Calu3 (cell line): ENCODE measurements at regions of chr2 and their contacts with region 1.

Region 1: DNA sequence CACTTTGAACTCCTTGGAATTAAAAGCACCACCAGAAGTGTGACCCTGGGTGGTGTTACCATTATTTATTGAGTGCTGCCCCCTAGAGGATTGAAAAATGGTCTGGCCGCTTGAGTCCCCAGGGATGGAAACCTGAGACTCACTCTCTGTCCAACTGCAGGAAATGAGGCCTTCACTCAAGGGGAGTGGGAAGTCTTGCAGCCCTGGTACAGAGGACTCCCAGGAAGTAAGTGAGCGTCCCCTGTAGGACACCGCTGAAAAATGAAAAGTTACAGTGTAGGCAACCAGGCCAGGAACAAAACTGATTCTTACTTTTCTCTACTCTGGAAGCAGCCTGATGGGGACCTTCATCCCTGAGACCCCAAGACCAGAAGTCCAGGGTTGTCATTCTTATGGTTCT is 2.2 kb upstream of the NRP2 start:
- DNase-seq: peak; percentile 82
- H3K4me3 Mint-ChIP-seq: no peak overlapping the region
- H3K27ac Mint-ChIP-seq: no peak overlapping the region
- H3K4me1 Mint-ChIP-seq: peaks cover 19% of the 10 kb centered on the region
- H3K27me3 Mint-ChIP-seq: no peaks in the 10 kb centered on the region
- CTCF ChIP-seq: peak; percentile 62

Region 2: DNA sequence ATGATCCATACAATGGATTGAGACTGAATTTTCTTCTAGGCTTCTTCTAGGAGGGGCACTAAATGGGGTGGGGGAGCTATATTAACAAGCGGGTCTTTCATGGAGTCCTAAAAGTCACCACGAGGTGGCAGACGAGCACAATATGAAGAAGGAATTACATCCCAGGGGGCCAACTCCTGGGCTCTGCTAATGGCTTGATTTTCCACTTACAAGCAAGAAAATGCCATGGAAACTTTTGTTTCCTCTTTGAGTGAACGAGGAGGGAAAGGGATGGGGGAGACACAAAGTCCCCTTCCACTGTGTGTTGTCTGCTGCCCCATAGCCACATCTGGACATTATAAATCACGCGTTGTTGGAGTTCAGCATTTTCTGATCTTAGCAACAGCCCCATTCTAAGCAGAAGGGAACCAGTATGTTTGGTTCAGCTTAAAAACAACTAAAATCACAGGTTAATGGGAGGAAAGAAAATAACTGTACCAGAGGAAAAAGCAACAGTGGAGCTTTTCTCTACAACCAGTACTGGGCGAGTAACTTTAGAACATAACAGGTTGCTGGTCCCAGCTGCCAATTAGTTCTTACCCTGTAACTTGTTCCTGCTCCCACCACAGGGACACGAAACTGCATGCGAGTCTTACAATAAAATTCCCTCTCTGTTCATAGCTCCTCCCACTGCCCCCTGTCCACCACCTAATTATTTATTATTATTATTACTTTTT is 1419.7 kb before region 1 on chr2:
- CTCF ChIA-PET with region 1: no interaction called
- intact Hi-C with region 1: loop called (anchors 5 kb)
- DNase-seq: peak; percentile 66
- H3K4me3 Mint-ChIP-seq: no peak overlapping the region
- H3K27ac Mint-ChIP-seq: no peak overlapping the region
- H3K4me1 Mint-ChIP-seq: peaks cover 23% of the 10 kb centered on the region
- H3K27me3 Mint-ChIP-seq: no peaks in the 10 kb centered on the region
- CTCF ChIP-seq: peak; percentile 88

Region 3: DNA sequence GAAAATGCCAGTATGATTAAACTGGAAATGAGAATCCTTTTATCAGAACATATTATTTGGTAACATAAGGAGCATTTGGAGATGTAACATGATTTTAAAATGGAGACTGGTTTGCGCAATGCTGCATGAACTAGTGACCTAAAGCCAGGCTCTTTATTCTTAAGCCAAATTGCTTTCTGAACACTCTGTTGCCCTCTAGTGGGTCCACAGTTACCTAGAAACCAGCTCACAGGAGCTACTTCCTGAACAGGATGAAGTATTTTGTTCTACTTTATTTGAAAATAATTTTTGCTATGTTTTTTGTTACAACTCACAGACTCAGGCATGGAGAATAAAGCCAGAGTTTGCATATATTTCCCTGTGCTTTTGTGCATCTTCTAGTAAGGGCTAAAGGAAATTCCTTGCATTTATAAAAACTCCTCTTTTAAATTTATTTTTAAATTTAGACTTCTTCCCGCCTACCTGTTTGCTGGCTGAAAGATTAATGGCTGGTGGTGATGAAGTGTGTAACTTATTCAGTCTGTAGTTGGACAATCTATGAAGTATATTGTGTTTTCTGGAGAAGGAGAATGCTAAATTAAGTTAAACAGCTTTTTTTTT is 988.1 kb before region 1 on chr2:
- CTCF ChIA-PET with region 1: no interaction called
- intact Hi-C with region 1: loop called (anchors 5 kb)
- DNase-seq: peak; percentile 63
- H3K4me3 Mint-ChIP-seq: no peak overlapping the region
- H3K27ac Mint-ChIP-seq: no peak overlapping the region
- H3K4me1 Mint-ChIP-seq: peaks cover 8% of the 10 kb centered on the region
- H3K27me3 Mint-ChIP-seq: no peaks in the 10 kb centered on the region
- CTCF ChIP-seq: peak; percentile 57

Region 4: GRCh38 chr2:204885747-204886146 is 794.3 kb before region 1 on chr2:
- CTCF ChIA-PET with region 1: interaction called, 5 read pairs
- intact Hi-C with region 1: loop called (anchors 1 kb)
- DNase-seq: peak; percentile 11
- H3K4me3 Mint-ChIP-seq: no peak overlapping the region
- H3K27ac Mint-ChIP-seq: no peak overlapping the region
- H3K4me1 Mint-ChIP-seq: no peaks in the 10 kb centered on the region
- H3K27me3 Mint-ChIP-seq: no peaks in the 10 kb centered on the region
- CTCF ChIP-seq: no peak

Region 5: GRCh38 chr2:205748639-205749477 is 68.8 kb after region 1 on chr2:
- CTCF ChIA-PET with region 1: interaction called, 4 read pairs
- intact Hi-C with region 1: loop called (anchors 5 kb)
- DNase-seq: peak; percentile 66
- H3K4me3 Mint-ChIP-seq: peak overlapping the region; percentile 50
- H3K27ac Mint-ChIP-seq: peak overlapping the region; percentile 96
- H3K4me1 Mint-ChIP-seq: peaks cover 82% of the 10 kb centered on the region
- H3K27me3 Mint-ChIP-seq: no peaks in the 10 kb centered on the region
- CTCF ChIP-seq: no peak

Region 6: GRCh38 chr2:205814039-205814364 is 133.9 kb after region 1 on chr2:
- CTCF ChIA-PET with region 1: no interaction called
- intact Hi-C with region 1: loop called (anchors 5 kb)
- DNase-seq: no peak
- H3K4me3 Mint-ChIP-seq: no peak overlapping the region
- H3K27ac Mint-ChIP-seq: no peak overlapping the region
- H3K4me1 Mint-ChIP-seq: no peaks in the 10 kb centered on the region
- H3K27me3 Mint-ChIP-seq: no peaks in the 10 kb centered on the region
- CTCF ChIP-seq: no peak